Mucosa of descending colon (tissue), 3 donors: ENCODE measurements at regions of chr6 and their contacts with region 1.

Region 1: GRCh38 chr6:155174576-155175211 is 89.1 kb upstream of the CLDN20 start:
- DNase-seq: peak in 2 of 3 donors; percentile 41 to 85
- ATAC-seq: peak; percentile 89
- H3K4me3 ChIP-seq: no peak overlapping the region
- H3K4me1 ChIP-seq: peaks cover 5% of the 10 kb centered on the region
- CTCF ChIP-seq: no peak

Region 2: GRCh38 chr6:154928325-154928922 is 246.3 kb before region 1 on chr6:
- intact Hi-C with region 1: loop called (anchors 2 to 10 kb)
- DNase-seq: peak in 2 of 3 donors; percentile 37 to 87
- ATAC-seq: peak; percentile 75
- H3K4me3 ChIP-seq: no peak overlapping the region
- H3K4me1 ChIP-seq: no peaks in the 10 kb centered on the region
- CTCF ChIP-seq: peak; percentile 58

Region 3: DNA sequence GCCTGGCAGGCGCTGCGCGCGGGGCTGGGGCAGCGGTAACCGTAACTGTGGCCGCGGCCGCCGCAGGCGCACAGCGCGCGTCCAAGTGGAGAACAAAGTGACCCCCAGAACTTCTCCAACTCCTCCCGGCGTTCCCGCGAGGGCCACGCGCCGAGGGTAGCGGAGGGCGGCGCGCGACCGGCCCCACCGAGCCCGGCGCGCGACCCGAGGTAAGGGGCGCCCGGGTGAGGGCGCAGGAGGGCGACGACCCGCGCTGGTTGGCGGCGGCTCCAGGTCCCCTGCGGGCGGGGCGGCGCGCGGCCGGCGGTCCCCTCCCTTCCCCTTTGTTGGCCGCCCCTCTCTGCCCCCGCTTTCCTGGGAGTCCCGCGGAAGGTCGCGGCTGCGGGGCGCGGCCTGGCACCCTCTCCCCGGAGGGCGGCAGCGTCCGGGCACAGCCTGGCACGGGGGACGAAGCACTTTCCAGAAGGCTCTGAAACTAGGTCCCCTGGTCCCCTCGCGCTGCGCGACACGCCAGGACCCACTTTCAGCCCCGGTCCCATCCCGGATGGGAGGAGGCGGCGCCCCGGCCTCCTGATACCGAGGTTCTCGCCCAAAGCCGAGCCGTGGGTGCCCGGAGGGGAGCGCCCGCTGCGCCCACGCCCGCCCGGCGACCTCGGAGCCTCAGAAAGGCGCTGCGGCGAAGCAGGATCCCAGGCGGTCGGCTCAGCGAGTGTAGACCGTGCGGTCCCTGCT is 179.2 kb before region 1 on chr6 and contains the start of gene TIAM2:
- intact Hi-C with region 1: no loop called
- DNase-seq: peak in 2 of 3 donors; percentile 20 to 36
- ATAC-seq: peak; percentile 60
- H3K4me3 ChIP-seq: peak within 1 kb of the TSS; percentile 6
- H3K4me1 ChIP-seq: peaks cover 6% of the 10 kb centered on the region
- CTCF ChIP-seq: no peak
- total RNA-seq, gene TIAM2: 4.2 to 12.2 (median 9.8) TPM

Region 4: DNA sequence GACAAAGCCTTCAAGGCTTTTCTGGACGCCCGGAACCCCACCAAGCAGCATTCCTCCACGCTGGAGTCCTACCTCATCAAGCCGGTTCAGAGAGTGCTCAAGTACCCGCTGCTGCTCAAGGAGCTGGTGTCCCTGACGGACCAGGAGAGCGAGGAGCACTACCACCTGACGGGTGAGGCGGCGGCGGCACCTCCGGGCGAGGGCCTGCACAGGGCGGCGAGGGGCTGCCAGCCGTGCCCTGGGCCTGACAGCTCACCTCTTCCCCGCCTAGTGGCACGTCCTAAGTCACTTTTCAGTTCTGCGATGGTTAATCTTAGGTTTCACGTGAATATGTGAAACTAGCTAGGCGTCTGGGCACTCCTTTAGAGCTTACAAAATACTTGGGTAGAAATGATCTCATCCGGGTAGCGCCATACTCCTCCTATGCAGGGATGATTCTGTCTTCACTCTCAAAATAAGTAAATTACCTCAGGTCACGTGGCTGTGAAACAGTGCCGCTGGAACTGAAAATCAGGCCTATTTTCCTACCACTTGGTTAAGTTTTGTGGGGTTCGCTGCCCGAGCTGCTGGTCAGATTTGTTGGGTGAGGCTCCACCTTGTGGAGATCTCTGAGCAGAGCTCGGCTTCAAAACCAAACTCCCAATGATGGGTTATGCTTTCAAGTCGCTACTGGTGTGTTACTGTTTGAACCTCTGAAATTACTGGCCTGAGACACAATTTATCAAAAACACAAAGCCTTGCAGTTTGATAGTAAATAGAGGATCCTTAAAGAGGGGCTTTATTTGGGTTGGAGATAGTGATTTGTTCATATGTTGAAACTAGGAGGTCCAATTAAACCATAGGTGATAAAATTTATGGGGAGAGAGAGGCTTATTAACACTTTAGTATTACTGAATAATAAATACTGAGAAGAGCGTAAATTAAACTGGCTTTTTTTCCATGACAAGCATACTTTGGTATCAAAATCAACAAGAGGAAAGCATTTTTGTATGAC is 73.6 kb after region 1 on chr6:
- intact Hi-C with region 1: loop called (anchors 5 kb)
- DNase-seq: peak in 2 of 3 donors; percentile 39 to 56
- ATAC-seq: peak; percentile 65
- H3K4me3 ChIP-seq: no peak overlapping the region
- H3K4me1 ChIP-seq: no peaks in the 10 kb centered on the region
- CTCF ChIP-seq: peak; percentile 27

Region 5: DNA sequence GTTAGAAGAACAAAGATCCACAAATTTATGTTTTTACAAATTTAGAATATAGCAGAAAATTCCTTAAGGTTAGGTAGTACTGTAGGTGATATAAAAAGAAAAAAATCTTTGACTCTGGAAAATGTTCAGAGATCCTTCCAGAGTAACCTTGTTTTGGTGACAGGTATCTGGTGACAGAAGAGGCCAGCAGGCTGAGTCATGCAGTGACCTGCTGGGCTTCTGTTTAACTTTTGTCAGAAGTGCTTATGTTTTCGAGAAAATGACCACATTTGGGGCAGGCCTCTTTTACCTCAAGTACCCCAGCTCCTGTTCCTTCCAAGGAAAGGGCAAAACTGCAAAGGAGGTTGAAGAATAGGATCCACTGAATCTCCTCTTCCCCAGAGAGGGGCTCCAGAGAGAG is 78.6 kb after region 1 on chr6:
- intact Hi-C with region 1: loop called (anchors 5 kb)
- DNase-seq: no peak
- ATAC-seq: no peak
- H3K4me3 ChIP-seq: no peak overlapping the region
- H3K4me1 ChIP-seq: no peaks in the 10 kb centered on the region
- CTCF ChIP-seq: no peak